ENCODE measurements at regions of chr3 and their contacts with region 1.

Region 1: GRCh38 chr3:62558549-62559112 is 185.3 kb upstream of the FEZF2 start:
- DNase-seq: peak; percentile 17 to 34
- H3K4me3 ChIP-seq: no peak overlapping the region
- H3K4me3 Mint-ChIP-seq: no peak overlapping the region
- H3K27ac Mint-ChIP-seq: no peak overlapping the region
- H3K4me1 ChIP-seq: no peaks in the 10 kb centered on the region
- H3K4me1 Mint-ChIP-seq: no peaks in the 10 kb centered on the region
- H3K27me3 ChIP-seq: no peaks in the 10 kb centered on the region
- H3K27me3 Mint-ChIP-seq: peaks cover 2% of the 10 kb centered on the region
- CTCF ChIP-seq: peak; percentile 28 to 42

Region 2: DNA sequence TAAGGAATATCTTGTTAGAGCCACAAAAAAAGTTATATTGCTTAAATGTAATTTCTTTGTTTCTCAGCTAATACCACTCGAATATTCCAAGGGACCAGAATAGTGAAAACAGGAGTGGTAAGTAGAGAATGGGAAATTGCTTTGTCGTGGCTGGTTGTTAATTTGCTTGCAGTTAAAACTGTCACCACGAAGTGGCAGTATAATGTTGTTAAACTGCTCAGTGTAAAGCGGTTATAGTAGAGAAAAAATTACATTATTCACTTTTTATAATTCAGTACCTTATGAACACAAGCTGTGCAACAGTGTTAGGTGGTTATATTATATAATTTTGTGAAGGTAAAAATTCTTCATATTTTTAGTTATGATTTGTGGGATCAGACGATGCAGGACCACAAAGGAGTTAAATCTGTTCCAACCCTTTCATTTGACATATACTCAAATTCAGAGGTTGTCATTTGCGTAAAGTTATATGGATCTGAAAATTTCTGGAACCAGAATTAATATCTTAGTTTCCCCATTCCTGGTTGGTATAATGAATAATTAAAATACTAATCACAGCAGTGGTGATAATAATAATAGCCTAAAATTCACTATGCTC is 357.1 kb before region 1 on chr3:
- CTCF ChIA-PET with region 1: no interaction called
- POLR2A ChIA-PET with region 1: no interaction called
- intact Hi-C with region 1: loop called (anchors 2 kb)
- DNase-seq: peak in 1 of 2 experiments; percentile 23
- H3K4me3 ChIP-seq: no peak overlapping the region
- H3K4me3 Mint-ChIP-seq: no peak overlapping the region
- H3K27ac Mint-ChIP-seq: no peak overlapping the region
- H3K4me1 ChIP-seq: no peaks in the 10 kb centered on the region
- H3K4me1 Mint-ChIP-seq: no peaks in the 10 kb centered on the region
- H3K27me3 ChIP-seq: no peaks in the 10 kb centered on the region
- H3K27me3 Mint-ChIP-seq: no peaks in the 10 kb centered on the region
- CTCF ChIP-seq: peak; percentile 41 to 53

Region 3: DNA sequence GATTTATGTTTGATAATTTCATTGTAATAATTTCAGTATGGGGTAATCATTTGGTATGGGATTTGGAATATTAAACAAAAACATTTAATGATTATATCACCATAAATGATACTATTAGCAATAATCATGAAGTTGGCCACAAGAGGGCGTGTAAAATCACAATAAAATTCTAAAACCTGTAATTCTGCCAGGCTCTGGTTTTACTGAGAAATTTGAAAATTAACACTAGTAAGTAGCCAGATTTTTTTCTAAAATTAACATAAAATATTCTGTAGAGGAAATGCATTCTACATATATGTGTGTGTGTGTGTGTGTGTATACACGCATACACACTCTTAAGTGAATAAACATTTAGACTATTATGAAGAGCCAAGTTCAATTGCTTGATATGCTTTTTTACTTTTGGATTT is 225.8 kb before region 1 on chr3:
- CTCF ChIA-PET with region 1: interaction called, 4 read pairs
- POLR2A ChIA-PET with region 1: no interaction called
- intact Hi-C with region 1: loop called (anchors 1 kb)
- DNase-seq: peak in 1 of 2 experiments; percentile 14
- H3K4me3 ChIP-seq: no peak overlapping the region
- H3K4me3 Mint-ChIP-seq: no peak overlapping the region
- H3K27ac Mint-ChIP-seq: no peak overlapping the region
- H3K4me1 ChIP-seq: no peaks in the 10 kb centered on the region
- H3K4me1 Mint-ChIP-seq: no peaks in the 10 kb centered on the region
- H3K27me3 ChIP-seq: no peaks in the 10 kb centered on the region
- H3K27me3 Mint-ChIP-seq: peaks cover 22% of the 10 kb centered on the region
- CTCF ChIP-seq: peak; percentile 43 to 56

Region 4: DNA sequence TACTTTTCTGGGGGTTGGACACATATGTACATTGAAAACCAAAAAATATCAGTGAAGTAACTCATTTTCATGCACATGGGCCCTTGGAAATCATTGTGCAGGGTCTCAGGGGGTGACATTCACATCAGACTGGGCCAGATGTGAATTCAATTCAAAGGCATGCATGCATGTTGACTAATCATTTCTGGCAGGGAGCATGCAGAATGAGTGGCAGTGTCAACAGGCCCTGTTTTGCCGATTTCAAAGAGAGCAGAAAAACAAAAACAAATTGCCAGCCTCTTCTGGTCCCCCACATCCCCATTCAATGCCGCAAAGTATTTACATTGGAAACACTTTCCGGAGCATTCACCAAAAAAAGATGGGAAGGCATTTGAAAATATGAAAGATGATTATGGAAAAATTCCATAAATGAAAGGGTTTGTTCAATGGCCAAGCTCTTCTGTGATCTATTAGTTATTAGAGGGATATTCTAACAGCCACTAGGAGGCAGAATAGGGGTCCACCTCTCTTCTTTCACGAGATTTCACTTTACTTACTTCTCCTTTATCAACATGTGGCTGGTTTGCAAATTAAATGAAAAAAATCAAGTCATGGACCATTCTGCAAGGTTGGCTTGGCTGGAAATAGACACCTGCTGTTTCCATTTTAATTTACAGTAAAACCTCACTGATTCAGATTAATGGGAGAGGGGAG is 65.4 kb before region 1 on chr3:
- CTCF ChIA-PET with region 1: no interaction called
- POLR2A ChIA-PET with region 1: no interaction called
- intact Hi-C with region 1: loop called (anchors 2 kb)
- DNase-seq: no peak
- H3K4me3 ChIP-seq: no peak overlapping the region
- H3K4me3 Mint-ChIP-seq: no peak overlapping the region
- H3K27ac Mint-ChIP-seq: no peak overlapping the region
- H3K4me1 ChIP-seq: no peaks in the 10 kb centered on the region
- H3K4me1 Mint-ChIP-seq: no peaks in the 10 kb centered on the region
- H3K27me3 ChIP-seq: no peaks in the 10 kb centered on the region
- H3K27me3 Mint-ChIP-seq: peaks cover 20% of the 10 kb centered on the region
- CTCF ChIP-seq: peak in 1 of 2 experiments; percentile 26

Measured in Caco-2 (cell line).